WTC11 (cell line): ENCODE measurements at regions of chr11 and their contacts with region 1.

Region 1: DNA sequence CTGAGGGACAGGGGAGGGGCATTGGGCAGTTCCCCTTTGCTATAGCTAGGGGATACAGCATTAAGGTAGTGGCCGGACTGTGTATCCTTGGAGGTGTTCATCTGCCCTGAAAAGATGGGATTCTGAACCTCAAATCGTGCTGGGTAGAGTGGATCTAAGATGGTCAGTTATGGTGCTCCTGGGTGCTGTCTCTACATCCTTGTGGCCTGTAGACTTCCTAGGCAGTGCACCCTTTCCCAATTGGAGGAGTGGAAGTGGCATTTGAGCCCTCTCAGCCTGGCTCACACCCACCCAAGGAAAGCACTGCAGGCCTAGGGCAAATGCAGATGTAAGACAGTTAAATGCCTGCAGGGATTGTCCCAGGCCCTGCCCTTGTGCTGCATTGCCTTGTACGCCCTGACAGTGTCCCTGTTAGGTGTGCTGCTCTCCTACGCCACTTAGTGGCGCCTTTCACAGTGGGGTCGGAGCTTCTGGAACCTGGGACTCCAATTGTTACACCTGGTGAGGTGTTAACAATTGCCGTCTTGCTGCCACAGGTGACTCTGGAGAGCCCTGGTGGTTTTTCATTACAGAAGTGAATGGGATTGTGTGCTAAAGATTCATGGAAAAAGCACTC is 35.0 kb downstream of the PPFIBP2 start:
- DNase-seq: peak; percentile 84
- ATAC-seq: peak; percentile 98
- H3K4me3 Mint-ChIP-seq: no peak overlapping the region
- H3K27ac Mint-ChIP-seq: 0 out of 2 replicates have a peak overlapping the region, but pooled peaks have one; percentile 14
- H3K4me1 Mint-ChIP-seq: peaks cover 37% of the 10 kb centered on the region
- H3K27me3 Mint-ChIP-seq: no peaks in the 10 kb centered on the region
- CTCF ChIP-seq: peak; percentile 45; the same call in 1 of the 2 replicates

Region 2: DNA sequence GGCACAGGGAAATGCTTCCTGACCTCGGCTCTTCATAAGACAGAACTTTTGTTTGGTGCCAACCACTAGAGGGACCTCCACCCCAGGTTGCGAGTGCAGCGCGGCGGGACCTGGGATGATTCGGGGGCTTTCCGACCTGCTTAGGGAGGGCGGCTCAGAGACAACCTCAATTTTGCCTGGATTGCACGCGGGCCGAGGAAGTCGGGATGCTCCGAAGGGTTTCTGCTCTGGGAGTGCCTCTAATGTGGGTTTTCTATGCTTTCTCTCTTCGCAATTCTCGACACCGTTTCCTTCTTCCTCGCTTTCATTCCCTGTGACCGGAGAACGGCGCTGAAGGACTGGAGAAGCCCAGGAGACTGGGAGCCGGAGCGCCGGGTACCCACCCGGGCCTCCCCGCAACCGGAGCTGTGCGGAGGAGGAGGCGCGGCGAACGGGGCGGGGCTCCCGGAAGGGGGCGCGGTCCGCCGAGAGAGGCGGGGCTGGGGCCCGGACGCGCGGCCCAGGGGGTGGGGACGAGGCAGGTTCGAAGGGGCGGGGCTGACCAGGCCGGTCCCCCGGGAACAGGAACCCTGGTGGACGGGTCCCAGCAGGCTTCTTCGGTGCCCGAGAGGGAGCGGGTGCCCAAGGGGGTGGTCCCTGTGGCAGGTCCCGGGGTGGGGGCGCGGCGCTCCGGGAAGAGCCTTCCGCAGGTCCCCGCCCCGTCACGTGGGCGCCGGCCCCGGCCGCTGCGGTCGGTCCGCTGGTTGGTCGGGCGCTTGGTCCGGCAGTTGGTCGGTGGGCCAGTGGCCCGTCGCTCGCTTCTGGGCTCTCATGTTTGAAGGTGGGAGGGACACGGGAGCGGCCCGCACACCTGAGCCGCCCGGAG is 35.3 kb before region 1 on chr11 and contains the start of gene PPFIBP2:
- CTCF ChIA-PET with region 1: interaction called, 23 read pairs
- POLR2A ChIA-PET with region 1: no interaction called
- DNase-seq: peak; percentile 83
- ATAC-seq: peak; percentile 83
- H3K4me3 Mint-ChIP-seq: peak within 1 kb of the TSS; percentile 83
- H3K27ac Mint-ChIP-seq: peak within 1 kb of the TSS; percentile 63
- H3K4me1 Mint-ChIP-seq: peaks cover 41% of the 10 kb centered on the region
- H3K27me3 Mint-ChIP-seq: peaks cover 24% of the 10 kb centered on the region
- CTCF ChIP-seq: no peak
- total RNA-seq, gene PPFIBP2: 12.5 to 21.4 TPM (median 12.9 TPM) in 3 replicates

Region 3: DNA sequence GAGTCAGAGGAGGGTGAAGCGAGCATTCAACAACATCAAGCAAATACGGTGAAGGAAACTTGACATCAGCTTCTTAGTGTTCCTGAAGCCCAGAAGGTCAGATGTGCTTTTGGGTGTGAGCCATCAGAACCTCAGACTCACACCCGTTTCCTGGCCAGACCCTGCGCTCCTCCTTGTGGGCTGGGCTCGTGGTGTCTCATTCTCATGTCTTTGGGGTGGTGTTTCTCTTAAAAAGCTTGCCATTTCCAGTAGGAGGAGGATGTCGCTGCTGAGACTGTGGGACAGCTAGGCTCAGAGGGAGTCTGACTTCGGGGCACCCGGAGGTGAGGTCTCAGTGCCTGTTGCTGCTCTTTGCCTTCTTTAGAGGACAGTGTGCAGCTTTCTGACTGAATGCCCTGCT is 10.7 kb before region 1 on chr11:
- CTCF ChIA-PET with region 1: interaction called, 14 read pairs
- POLR2A ChIA-PET with region 1: no interaction called
- DNase-seq: no peak
- ATAC-seq: no peak
- H3K4me3 Mint-ChIP-seq: no peak overlapping the region
- H3K27ac Mint-ChIP-seq: no peak overlapping the region
- H3K4me1 Mint-ChIP-seq: peaks cover 6% of the 10 kb centered on the region; the same call in 1 of the 2 replicates
- H3K27me3 Mint-ChIP-seq: no peaks in the 10 kb centered on the region
- CTCF ChIP-seq: no peak

Region 4: DNA sequence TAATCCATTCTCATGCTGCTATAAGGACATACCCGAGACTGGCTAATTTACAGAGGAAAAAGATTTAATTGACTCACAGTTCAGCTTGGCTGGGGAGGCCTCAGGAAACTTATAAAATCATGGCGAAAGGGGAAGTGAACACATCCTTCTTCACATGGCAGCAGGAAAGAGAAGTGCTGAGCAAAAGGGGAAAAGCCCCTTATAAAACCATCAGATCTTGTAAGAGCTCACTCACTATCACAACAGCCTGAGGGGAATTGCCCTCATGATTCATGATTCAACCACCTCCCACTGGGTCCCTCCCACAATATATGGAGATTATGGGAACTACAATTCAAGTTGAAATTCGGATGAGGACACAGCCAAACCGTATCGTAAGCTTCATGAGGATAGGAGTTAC is 128.3 kb after region 1 on chr11:
- CTCF ChIA-PET with region 1: no interaction called
- POLR2A ChIA-PET with region 1: no interaction called
- DNase-seq: no peak
- ATAC-seq: no peak
- H3K4me3 Mint-ChIP-seq: no peak overlapping the region
- H3K27ac Mint-ChIP-seq: no peak overlapping the region
- H3K4me1 Mint-ChIP-seq: peaks cover 53% of the 10 kb centered on the region
- H3K27me3 Mint-ChIP-seq: 0 out of 2 replicates have a peak, but pooled peaks cover 4% of the 10 kb centered on the region
- CTCF ChIP-seq: no peak